Naive thymus-derived CD4-positive, alpha-beta T cell (primary cell): ENCODE measurements at regions of chr3 and their contacts with region 1.

Region 1: DNA sequence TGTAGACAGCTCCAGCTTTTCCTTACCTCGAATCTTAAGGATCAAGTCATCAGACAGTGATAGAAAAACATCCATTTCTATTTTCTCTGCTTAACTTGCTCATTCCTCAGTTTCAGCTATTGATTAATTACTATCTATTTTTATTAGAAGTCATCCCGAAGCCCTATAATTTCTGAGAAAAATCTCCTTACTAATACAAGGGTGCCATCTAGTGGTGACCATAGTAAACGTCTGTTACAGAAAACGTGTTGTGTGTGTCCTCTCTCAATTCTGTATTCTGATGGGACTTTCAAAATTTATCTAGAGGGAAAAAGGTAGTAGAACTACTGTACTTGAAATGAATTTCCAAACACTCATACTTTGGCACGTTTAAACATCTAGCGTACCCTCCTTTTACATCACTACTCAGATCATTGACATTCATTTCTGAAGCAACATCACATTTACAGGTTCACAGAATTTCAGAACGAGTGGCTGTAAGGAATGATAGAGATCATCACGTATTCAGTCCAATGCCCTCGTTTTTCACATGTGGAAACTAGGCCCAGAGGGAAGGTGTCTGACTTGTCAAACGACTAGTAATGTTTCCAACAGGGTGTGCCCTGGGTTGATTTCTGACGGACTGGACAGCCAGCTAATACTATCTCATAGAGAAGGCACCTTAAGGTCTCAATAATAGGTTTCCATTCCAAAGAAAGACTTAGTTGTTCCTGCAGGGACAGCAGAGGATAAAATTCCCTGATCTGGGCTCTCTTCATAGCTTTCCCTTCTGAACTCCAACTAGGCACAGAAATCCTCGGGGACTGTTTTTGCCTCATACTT is 25.6 kb downstream of the HACD2 start:
- DNase-seq: peak in 6 of 9 donors; percentile 26 to 58 (median 49)
- ATAC-seq: peak; percentile 45
- H3K4me3 ChIP-seq: no peak overlapping the region
- H3K4me3 Mint-ChIP-seq: no peak overlapping the region
- H3K27ac ChIP-seq: no peak overlapping the region
- H3K27ac Mint-ChIP-seq: no peak overlapping the region
- H3K4me1 ChIP-seq: no peaks in the 10 kb centered on the region
- H3K4me1 Mint-ChIP-seq: peaks cover 0 to 10% (median 5%) of the 10 kb centered on the region in 7 donors
- H3K27me3 ChIP-seq: no peaks in the 10 kb centered on the region
- H3K27me3 Mint-ChIP-seq: no peaks in the 10 kb centered on the region

Region 2: GRCh38 chr3:123328851-123329635 is 230.2 kb before region 1 on chr3:
- CTCF ChIA-PET with region 1: interaction called, 17 read pairs
- POLR2A ChIA-PET with region 1: no interaction called
- intact Hi-C with region 1: loop called in 1 of 2 experiments (anchors 1 kb)
- DNase-seq: peak; percentile 26 to 78 (median 63)
- ATAC-seq: peak; percentile 77
- H3K4me3 ChIP-seq: no peak overlapping the region
- H3K4me3 Mint-ChIP-seq: no peak overlapping the region
- H3K27ac ChIP-seq: no peak overlapping the region
- H3K27ac Mint-ChIP-seq: no peak overlapping the region
- H3K4me1 ChIP-seq: no peaks in the 10 kb centered on the region
- H3K4me1 Mint-ChIP-seq: peaks cover 0 to 5% (median 0%) of the 10 kb centered on the region in 7 donors
- H3K27me3 ChIP-seq: no peaks in the 10 kb centered on the region
- H3K27me3 Mint-ChIP-seq: peaks cover 0 to 10% (median 0%) of the 10 kb centered on the region in 5 donors

Region 3: DNA sequence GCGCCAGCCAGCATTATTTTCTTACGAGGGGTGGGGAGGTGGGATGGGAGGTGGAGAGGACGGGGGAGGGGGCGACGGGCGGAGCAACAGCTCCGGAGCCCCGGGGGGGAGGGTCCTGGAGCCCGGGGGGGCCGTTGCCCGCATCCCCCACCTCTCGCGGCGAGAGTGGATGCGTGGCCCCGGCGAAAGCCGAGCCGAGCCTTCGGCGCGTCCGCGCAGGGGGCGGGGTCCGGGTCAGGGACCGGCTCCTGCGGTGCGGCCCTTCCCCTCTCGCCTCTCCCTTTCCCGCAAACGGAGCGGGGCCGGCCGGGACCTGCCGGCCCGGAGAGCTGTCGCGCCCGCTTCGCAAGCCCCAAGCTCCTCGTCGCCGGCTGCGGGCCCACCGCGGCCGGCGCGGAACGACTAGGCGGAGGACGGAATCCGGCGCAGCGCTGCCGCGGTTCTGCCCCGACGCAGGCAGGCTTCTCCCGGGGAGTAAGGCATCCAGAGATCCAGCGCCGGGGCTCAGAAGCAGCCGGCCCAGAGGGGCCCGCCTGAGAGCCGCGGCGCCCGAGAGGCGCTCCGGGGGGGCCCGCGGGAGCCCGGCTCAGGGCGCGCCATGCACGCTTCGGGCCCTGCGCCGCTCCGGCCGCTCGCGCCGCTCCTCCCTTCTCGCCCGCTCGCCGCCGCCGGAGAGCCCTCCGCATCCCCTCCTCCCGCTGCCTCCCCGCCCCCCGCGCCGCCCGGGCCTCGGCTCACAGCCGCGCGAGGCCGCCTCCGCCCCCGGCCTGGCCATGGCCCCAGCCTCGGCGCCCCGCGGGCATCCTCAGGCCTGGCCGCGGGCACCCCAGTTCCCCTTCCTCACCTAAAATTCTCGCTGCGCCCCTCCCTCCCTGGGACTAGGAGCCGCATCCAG is 109.9 kb before region 1 on chr3:
- CTCF ChIA-PET with region 1: interaction called, 3 read pairs
- POLR2A ChIA-PET with region 1: no interaction called
- intact Hi-C with region 1: loop called (anchors 1 to 2 kb)
- DNase-seq: peak in 3 of 9 donors; percentile 5 to 27 (median 7)
- ATAC-seq: peak; percentile 6
- H3K4me3 ChIP-seq: no peak overlapping the region
- H3K4me3 Mint-ChIP-seq: peak overlapping the region in 4 of 10 donors; percentile 8 to 71 (median 61)
- H3K27ac ChIP-seq: no peak overlapping the region
- H3K27ac Mint-ChIP-seq: no peak overlapping the region
- H3K4me1 ChIP-seq: no peaks in the 10 kb centered on the region
- H3K4me1 Mint-ChIP-seq: peaks cover 0 to 17% (median 5%) of the 10 kb centered on the region in 7 donors
- H3K27me3 ChIP-seq: no peaks in the 10 kb centered on the region
- H3K27me3 Mint-ChIP-seq: peaks cover 51 to 66% (median 55%) of the 10 kb centered on the region in 5 donors

Region 4: GRCh38 chr3:124202754-124203153 is 643.5 kb after region 1 on chr3:
- CTCF ChIA-PET with region 1: no interaction called
- POLR2A ChIA-PET with region 1: no interaction called
- intact Hi-C with region 1: no loop called
- DNase-seq: no peak
- ATAC-seq: no peak
- H3K4me3 ChIP-seq: no peak overlapping the region
- H3K4me3 Mint-ChIP-seq: no peak overlapping the region
- H3K27ac ChIP-seq: no peak overlapping the region
- H3K27ac Mint-ChIP-seq: no peak overlapping the region
- H3K4me1 ChIP-seq: no peaks in the 10 kb centered on the region
- H3K4me1 Mint-ChIP-seq: no peaks in the 10 kb centered on the region
- H3K27me3 ChIP-seq: no peaks in the 10 kb centered on the region
- H3K27me3 Mint-ChIP-seq: peaks cover 0 to 54% (median 21%) of the 10 kb centered on the region in 5 donors